SK-MEL-5 (cell line): ENCODE measurements at regions of chr11 and their contacts with region 1.

Region 1: GRCh38 chr11:117817368-117818040 is 7.0 kb downstream of the FXYD2 start:
- DNase-seq: peak; percentile 61

Region 2: DNA sequence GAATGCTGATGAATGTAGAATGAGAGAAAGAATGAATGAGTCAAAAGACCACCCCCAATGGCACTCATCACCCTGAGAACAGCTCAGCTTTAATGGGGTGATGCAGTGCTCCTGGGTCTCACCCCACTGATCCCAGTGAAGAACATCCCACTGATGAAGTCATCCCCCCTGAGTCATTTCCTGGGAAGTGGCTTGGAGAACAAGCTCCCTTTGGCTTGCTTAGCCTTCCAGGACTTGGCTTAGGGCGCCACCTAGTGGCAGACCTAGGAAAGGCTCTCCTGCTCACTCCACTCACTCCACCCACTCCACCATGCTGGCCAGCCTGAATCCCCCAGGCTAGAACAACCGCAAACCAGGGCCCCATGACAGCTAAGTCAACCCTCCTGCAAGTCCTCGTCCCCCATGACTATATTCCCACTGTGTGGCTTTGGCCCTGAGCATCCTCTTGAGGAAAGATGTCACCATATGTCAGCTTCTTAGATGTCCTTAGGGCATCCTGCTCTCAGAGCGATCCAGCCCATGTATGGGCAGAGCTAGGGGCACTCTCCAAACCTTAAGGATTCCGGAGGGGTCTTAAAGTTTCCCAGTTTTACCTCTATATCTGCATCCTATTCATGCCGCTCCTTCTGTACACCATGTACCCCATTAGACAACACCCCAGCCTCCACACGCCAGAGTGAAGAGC is 129.5 kb after region 1 on chr11:
- in situ Hi-C with region 1: loop called (anchors 25 kb)
- DNase-seq: peak; percentile 86